ENCODE measurements at regions of chr14 and their contacts with region 1.

Region 1: GRCh38 chr14:55438066-55438683 is 2.2 kb downstream of the TBPL2 start:
- DNase-seq: peak; percentile 46 to 79 (median 75)
- H3K4me3 ChIP-seq: no peak overlapping the region
- H3K27ac ChIP-seq: no peak overlapping the region
- H3K4me1 ChIP-seq: peaks cover 0 to 10% (median 6%) of the 10 kb centered on the region in 4 experiments
- H3K27me3 ChIP-seq: peaks cover 0 to 48% (median 18%) of the 10 kb centered on the region in 5 experiments

Region 2: DNA sequence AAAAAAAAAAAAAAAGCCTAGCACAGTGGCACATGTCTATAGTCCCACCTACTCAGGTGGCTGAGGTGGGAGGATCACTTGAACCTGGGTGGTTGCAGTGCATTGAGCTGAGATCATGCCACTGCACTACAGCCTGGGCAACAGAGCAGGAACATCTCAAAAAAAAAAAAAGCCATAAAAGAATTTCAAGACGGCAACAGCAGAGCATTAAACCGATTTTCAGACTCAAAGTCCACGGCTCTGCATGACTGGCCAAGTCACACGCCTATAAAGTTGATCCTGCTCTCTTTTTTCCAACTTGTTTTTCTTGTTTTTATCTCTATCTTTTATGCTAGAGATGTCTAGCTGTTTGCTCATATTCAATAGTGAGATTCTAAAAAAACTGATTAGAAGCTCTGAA is 121.6 kb before region 1 on chr14:
- CTCF ChIA-PET with region 1: no interaction called
- POLR2A ChIA-PET with region 1: no interaction called
- DNase-seq: no peak
- H3K4me3 ChIP-seq: no peak overlapping the region
- H3K27ac ChIP-seq: no peak overlapping the region
- H3K4me1 ChIP-seq: no peaks in the 10 kb centered on the region
- H3K27me3 ChIP-seq: no peaks in the 10 kb centered on the region

Region 3: DNA sequence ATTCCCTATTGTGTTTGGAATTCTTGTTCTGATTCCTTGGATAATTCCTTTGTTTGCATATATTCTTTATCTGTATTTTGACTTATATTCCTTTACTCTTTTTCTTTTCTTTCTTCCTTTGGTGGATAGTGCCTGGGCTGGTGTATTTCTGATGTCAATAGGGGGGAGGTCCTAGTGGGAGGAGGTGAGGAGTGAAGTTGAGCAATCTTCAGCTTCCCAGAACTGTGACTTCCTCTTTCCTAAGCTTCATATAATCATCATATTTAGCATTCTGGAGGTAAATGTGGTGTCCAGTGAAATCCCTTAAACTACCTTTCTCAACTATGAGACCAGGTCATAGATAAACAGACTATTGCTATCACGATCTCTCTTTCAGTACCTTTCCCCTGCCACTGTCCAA is 31.9 kb after region 1 on chr14:
- CTCF ChIA-PET with region 1: no interaction called
- POLR2A ChIA-PET with region 1: no interaction called
- DNase-seq: no peak
- H3K4me3 ChIP-seq: no peak overlapping the region
- H3K27ac ChIP-seq: no peak overlapping the region
- H3K4me1 ChIP-seq: peaks cover 0 to 7% (median 0%) of the 10 kb centered on the region in 4 experiments
- H3K27me3 ChIP-seq: no peaks in the 10 kb centered on the region

Region 4: GRCh38 chr14:55572578-55572977 is 134.4 kb after region 1 on chr14:
- CTCF ChIA-PET with region 1: no interaction called
- POLR2A ChIA-PET with region 1: no interaction called
- DNase-seq: peak in 2 of 3 donors; percentile 40 to 43
- H3K4me3 ChIP-seq: no peak overlapping the region
- H3K27ac ChIP-seq: no peak overlapping the region
- H3K4me1 ChIP-seq: no peaks in the 10 kb centered on the region
- H3K27me3 ChIP-seq: no peaks in the 10 kb centered on the region

Region 5: GRCh38 chr14:55628426-55628825 is 190.3 kb after region 1 on chr14:
- CTCF ChIA-PET with region 1: no interaction called
- POLR2A ChIA-PET with region 1: no interaction called
- DNase-seq: no peak
- H3K4me3 ChIP-seq: no peak overlapping the region
- H3K27ac ChIP-seq: no peak overlapping the region
- H3K4me1 ChIP-seq: no peaks in the 10 kb centered on the region
- H3K27me3 ChIP-seq: no peaks in the 10 kb centered on the region

Region 6: GRCh38 chr14:56487090-56487667 is 1049.0 kb after region 1 on chr14:
- CTCF ChIA-PET with region 1: interaction called, 10 read pairs
- POLR2A ChIA-PET with region 1: no interaction called
- DNase-seq: no peak
- H3K4me3 ChIP-seq: no peak overlapping the region
- H3K27ac ChIP-seq: no peak overlapping the region
- H3K4me1 ChIP-seq: peaks cover 0 to 5% (median 0%) of the 10 kb centered on the region in 4 experiments
- H3K27me3 ChIP-seq: peaks cover 0 to 1% (median 0%) of the 10 kb centered on the region in 5 experiments

Measured in common myeloid progenitor, CD34-positive (primary cell).